Right cardiac atrium (tissue), 5 donors: ENCODE measurements at regions of chr10 and their contacts with region 1.

Region 1: DNA sequence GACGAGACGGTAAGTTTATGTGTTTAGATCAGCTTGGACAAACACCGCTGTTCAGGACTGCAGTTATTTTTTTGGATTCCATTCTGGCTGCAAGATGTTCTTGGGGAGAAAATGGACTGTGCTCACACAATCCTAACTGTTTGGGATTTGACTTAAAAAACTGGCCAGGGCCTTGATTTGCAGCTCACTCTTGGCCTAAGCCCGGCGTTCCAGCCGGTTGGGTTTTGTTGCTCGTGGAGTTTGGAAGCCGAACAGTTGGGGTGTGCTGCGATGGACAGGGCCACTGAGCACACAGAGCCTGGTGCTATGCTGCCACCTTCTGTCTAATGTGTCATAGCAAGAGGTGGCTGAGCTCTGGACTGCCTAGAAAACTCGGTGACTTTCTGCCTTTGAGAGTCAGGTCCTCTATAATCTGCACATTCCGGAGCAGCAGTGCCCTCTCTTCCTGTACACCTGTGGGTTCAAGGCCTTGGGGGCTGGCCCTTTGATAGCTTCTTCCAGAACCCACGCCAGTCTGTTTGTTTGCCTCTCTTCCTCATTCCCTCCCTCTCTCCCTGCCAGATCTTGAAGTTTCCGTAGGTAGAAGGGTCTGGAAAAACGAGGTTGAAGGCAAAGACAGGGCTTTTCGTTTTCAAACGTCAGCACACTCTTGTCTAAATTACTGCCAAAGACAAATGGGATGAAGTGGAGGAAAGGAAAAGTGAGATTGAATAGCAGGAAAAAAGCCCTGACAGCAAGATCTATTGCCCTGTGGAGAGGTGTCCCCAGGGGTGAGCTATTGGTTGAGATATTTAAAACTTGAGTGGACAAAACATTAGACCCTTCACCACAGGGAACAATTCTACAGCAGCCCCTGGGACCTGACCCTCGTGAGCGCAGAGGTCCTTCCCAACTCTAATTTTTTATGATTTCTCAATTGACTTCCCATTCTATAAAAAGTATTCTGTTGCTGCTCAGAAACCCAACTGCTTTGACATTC is 167.5 kb upstream of the HABP2 start:
- DNase-seq: peak; percentile 87 to 95 (median 93)
- ATAC-seq: peak; percentile 98
- H3K4me3 ChIP-seq: no peak overlapping the region
- H3K27ac ChIP-seq: no peak overlapping the region
- H3K4me1 ChIP-seq: no peaks in the 10 kb centered on the region
- H3K27me3 ChIP-seq: no peaks in the 10 kb centered on the region

Region 2: GRCh38 chr10:112471878-112472487 is 913.3 kb before region 1 on chr10:
- intact Hi-C with region 1: loop called in 1 of 4 experiments (anchors 10 kb)
- DNase-seq: no peak
- ATAC-seq: peak; percentile 56 to 65
- H3K4me3 ChIP-seq: no peak overlapping the region
- H3K27ac ChIP-seq: no peak overlapping the region
- H3K4me1 ChIP-seq: no peaks in the 10 kb centered on the region
- H3K27me3 ChIP-seq: no peaks in the 10 kb centered on the region

Region 3: GRCh38 chr10:112565434-112566053 is 819.8 kb before region 1 on chr10:
- intact Hi-C with region 1: loop called in 1 of 4 experiments (anchors 10 kb)
- DNase-seq: no peak
- ATAC-seq: peak in 1 of 2 donors; percentile 62
- H3K4me3 ChIP-seq: no peak overlapping the region
- H3K27ac ChIP-seq: no peak overlapping the region
- H3K4me1 ChIP-seq: no peaks in the 10 kb centered on the region
- H3K27me3 ChIP-seq: no peaks in the 10 kb centered on the region

Region 4: DNA sequence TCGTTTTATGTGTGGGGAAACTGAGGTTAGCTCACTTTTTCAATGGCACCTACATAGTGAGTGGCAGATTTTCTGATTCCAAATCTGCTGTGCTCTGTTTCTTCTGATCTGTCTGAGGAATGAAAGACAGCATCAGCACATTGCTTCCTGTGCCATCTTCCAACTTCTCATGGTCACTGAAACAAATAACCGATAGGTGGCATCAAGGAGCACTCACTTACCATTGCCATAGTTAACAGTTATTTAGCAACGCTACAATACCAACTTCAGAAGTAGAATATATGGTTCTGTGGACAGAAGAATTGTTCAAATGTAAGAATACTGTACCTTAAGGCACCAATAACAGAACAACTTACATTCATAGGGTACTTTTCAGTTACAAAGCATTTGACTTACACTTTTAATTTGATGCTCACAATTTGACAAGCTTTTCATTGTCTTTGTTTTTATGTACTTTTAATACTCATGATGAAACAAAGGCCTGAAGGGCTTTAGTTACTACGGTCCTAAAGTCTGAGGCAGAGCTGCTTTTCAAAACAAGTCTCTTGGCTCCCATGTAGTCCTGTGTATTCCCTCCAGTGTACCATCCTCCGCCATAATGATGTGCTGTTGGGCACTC is 664.1 kb before region 1 on chr10:
- intact Hi-C with region 1: loop called in 1 of 4 experiments (anchors 10 kb)
- DNase-seq: no peak
- ATAC-seq: peak; percentile 60 to 71
- H3K4me3 ChIP-seq: no peak overlapping the region
- H3K27ac ChIP-seq: no peak overlapping the region
- H3K4me1 ChIP-seq: no peaks in the 10 kb centered on the region
- H3K27me3 ChIP-seq: no peaks in the 10 kb centered on the region

Region 5: GRCh38 chr10:113126229-113127201 is 258.8 kb before region 1 on chr10:
- intact Hi-C with region 1: loop called in 1 of 4 experiments (anchors 5 kb)
- DNase-seq: peak; percentile 73 to 91 (median 86)
- ATAC-seq: peak; percentile 95 to 97
- H3K4me3 ChIP-seq: peak overlapping the region; percentile 27
- H3K27ac ChIP-seq: no peak overlapping the region
- H3K4me1 ChIP-seq: no peaks in the 10 kb centered on the region
- H3K27me3 ChIP-seq: no peaks in the 10 kb centered on the region

Region 6: GRCh38 chr10:113139699-113140098 is 245.6 kb before region 1 on chr10:
- intact Hi-C with region 1: loop called in 1 of 4 experiments (anchors 10 kb)
- DNase-seq: no peak
- ATAC-seq: no peak
- H3K4me3 ChIP-seq: no peak overlapping the region
- H3K27ac ChIP-seq: no peak overlapping the region
- H3K4me1 ChIP-seq: no peaks in the 10 kb centered on the region
- H3K27me3 ChIP-seq: no peaks in the 10 kb centered on the region

Region 7: GRCh38 chr10:113169853-113170460 is 215.4 kb before region 1 on chr10:
- intact Hi-C with region 1: loop called in 1 of 4 experiments (anchors 10 kb)
- DNase-seq: no peak
- ATAC-seq: no peak
- H3K4me3 ChIP-seq: no peak overlapping the region
- H3K27ac ChIP-seq: no peak overlapping the region
- H3K4me1 ChIP-seq: no peaks in the 10 kb centered on the region
- H3K27me3 ChIP-seq: no peaks in the 10 kb centered on the region